Activated B cell treated with CpG ODN at 0.5 μM for 24 hours (primary cell): ENCODE measurements at regions of chr1 and their contacts with region 1.

Region 1: DNA sequence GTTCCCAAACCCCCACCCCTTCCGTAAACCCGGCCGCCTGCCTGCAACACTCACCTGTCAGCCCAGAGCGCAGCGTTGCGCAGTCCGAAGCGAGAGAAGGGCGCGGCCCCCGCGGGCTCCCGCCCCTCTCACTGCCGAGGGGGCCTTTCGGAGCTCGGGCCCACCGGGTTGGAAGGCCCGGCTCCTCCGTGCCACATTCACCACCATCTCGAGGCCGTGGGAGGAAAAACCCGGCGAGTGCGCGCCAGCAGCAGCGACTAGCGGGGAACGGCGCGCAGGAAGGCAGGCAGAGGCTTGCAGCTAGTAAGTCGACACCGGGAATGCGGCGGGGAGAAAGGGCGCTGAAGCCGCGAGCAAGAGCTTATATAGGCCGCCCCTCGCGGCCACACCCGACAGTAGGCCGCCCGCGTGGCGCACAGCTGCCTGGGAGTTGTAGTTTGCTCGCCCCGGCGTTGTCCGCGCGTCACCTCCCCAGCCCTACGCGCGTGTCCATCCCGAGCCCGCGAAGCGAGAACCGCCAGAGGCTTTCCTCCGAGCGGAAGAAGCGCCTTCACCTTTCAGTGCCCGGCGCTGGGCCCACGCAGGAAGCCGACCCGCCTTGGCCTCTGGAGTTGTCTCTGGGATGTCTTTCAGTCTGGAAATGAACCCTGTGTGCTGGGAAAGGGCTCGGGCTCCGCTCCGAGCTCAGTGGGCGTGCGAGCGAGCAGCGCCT is 10.4 kb upstream of the RAB42 start:
- DNase-seq: peak; percentile 94
- ATAC-seq: peak; percentile 90
- H3K4me3 Mint-ChIP-seq: peak overlapping the region; percentile 96
- H3K27ac Mint-ChIP-seq: peak overlapping the region; percentile 91
- H3K4me1 Mint-ChIP-seq: peaks cover 48% of the 10 kb centered on the region
- H3K27me3 Mint-ChIP-seq: no peaks in the 10 kb centered on the region
- CTCF ChIP-seq: no peak

Region 2: GRCh38 chr1:28259307-28260167 is 322.2 kb before region 1 on chr1 and contains the start of gene SESN2:
- CTCF ChIA-PET with region 1: no interaction called
- POLR2A ChIA-PET with region 1: interaction called, 16 read pairs
- intact Hi-C with region 1: no loop called
- DNase-seq: peak; percentile 99
- ATAC-seq: peak; percentile 98
- H3K4me3 Mint-ChIP-seq: peak within 1 kb of the TSS; percentile 82
- H3K27ac Mint-ChIP-seq: peak within 1 kb of the TSS; percentile 79
- H3K4me1 Mint-ChIP-seq: peaks cover 23% of the 10 kb centered on the region
- H3K27me3 Mint-ChIP-seq: peaks cover 6% of the 10 kb centered on the region
- CTCF ChIP-seq: no peak
- total RNA-seq, gene SESN2: 19.5 and 19.8 TPM in 2 replicates

Region 3: GRCh38 chr1:28395181-28395580 is 186.5 kb before region 1 on chr1:
- CTCF ChIA-PET with region 1: no interaction called
- POLR2A ChIA-PET with region 1: no interaction called
- intact Hi-C with region 1: no loop called
- DNase-seq: no peak
- ATAC-seq: no peak
- H3K4me3 Mint-ChIP-seq: no peak overlapping the region
- H3K27ac Mint-ChIP-seq: no peak overlapping the region
- H3K4me1 Mint-ChIP-seq: no peaks in the 10 kb centered on the region
- H3K27me3 Mint-ChIP-seq: no peaks in the 10 kb centered on the region
- CTCF ChIP-seq: no peak

Region 4: GRCh38 chr1:28552758-28553663 is 28.7 kb before region 1 on chr1 and contains the start of gene TRNAU1AP:
- CTCF ChIA-PET with region 1: interaction called, 10 read pairs
- POLR2A ChIA-PET with region 1: interaction called, 221 read pairs
- intact Hi-C with region 1: loop called (anchors 1 kb)
- DNase-seq: peak; percentile 94
- ATAC-seq: peak; percentile 93
- H3K4me3 Mint-ChIP-seq: peak within 1 kb of the TSS; percentile 99
- H3K27ac Mint-ChIP-seq: peak within 1 kb of the TSS; percentile 98
- H3K4me1 Mint-ChIP-seq: peaks cover 26% of the 10 kb centered on the region
- H3K27me3 Mint-ChIP-seq: no peaks in the 10 kb centered on the region
- CTCF ChIP-seq: no peak
- total RNA-seq, gene TRNAU1AP: 36.9 and 42.0 TPM in 2 replicates

Region 5: DNA sequence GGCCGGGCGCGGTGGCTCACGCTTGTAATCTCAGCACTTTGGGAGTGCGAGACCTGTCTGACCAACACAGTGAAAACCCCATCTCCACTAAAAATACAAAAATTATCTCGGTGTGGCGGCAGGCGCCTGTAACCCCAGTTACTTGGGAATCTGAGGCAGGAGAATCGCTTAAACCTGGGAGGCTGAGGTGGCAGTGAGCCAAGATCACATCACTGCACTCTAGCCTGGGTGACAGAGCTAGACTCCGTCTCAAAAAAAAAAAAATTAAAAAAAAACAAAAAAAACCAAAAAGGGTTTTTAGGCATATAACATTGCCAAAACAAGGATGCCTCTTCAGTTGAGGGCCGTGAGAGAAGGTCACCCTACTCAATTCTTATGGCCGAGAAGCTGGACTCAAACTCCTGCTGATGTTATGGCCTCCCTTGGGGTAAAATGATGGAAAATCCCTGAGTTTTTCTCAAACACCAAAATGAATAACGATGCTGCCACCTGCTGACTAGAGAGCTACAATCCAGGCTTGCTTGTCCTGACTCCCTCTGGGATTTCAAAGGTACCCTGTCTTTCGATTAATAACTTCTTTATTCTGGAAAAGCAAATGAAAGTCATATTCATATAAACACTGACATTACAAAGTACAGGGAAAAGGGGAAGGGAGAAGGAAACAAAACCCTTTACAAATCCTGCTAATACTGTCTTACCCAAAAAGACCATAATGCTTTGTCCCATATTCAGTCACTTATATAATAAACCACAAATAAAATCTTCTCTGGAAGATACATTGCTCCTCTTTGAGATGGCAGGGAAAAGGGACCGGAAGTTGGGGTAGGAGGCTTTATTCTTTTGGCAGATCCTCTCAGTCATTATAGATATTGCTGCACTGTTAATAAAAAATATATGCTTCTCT is 21.1 kb after region 1 on chr1:
- CTCF ChIA-PET with region 1: interaction called, 9 read pairs
- POLR2A ChIA-PET with region 1: interaction called, 38 read pairs
- intact Hi-C with region 1: no loop called
- DNase-seq: no peak
- ATAC-seq: peak; percentile 42
- H3K4me3 Mint-ChIP-seq: no peak overlapping the region
- H3K27ac Mint-ChIP-seq: no peak overlapping the region
- H3K4me1 Mint-ChIP-seq: no peaks in the 10 kb centered on the region
- H3K27me3 Mint-ChIP-seq: no peaks in the 10 kb centered on the region
- CTCF ChIP-seq: peak; percentile 53

Region 6: DNA sequence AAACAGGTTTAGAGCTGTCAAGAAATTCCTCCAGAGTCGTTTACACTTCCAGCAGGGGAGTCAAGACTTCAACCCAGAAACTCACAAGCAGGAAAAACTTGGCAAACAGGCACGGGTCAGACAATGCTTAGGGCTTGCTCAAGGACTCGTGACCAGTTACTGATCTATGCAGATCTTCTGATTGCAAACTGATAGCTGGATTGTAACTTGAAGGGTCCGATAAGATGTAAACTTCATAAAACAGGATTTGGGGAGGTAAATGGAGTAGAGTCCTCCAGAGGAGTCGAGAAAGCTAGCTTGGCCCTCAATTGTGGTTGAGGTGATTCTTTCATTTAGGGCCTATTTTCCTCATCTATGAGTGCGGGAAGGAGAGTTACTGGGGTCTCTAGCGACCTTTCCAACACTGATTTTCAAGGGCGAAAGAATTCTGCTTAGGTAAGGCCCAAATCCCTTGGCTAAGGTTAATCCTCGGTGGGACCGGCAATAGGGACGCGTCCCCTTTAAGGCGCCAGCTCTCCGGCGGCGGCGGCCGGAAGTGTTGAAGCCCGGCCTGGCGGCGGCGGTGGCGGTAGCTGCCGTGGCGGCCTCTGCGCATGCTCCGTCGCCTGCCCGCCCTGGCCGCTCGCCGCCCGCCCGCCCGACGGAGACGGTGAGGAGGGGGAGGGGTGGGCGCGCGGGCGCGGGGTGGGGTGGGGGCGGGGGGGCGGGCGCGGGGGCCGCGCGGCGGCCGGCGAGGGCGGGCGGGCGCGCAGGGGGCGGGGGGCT is 86.7 kb after region 1 on chr1 and contains the start of gene GMEB1:
- CTCF ChIA-PET with region 1: no interaction called
- POLR2A ChIA-PET with region 1: interaction called, 36 read pairs
- intact Hi-C with region 1: loop called (anchors 1 kb)
- DNase-seq: peak; percentile 73
- ATAC-seq: peak; percentile 65
- H3K4me3 Mint-ChIP-seq: peak within 1 kb of the TSS; percentile 92
- H3K27ac Mint-ChIP-seq: peak within 1 kb of the TSS; percentile 97
- H3K4me1 Mint-ChIP-seq: peaks cover 17% of the 10 kb centered on the region
- H3K27me3 Mint-ChIP-seq: no peaks in the 10 kb centered on the region
- CTCF ChIP-seq: no peak
- total RNA-seq, gene GMEB1: 26.8 and 27.4 TPM in 2 replicates

Region 7: DNA sequence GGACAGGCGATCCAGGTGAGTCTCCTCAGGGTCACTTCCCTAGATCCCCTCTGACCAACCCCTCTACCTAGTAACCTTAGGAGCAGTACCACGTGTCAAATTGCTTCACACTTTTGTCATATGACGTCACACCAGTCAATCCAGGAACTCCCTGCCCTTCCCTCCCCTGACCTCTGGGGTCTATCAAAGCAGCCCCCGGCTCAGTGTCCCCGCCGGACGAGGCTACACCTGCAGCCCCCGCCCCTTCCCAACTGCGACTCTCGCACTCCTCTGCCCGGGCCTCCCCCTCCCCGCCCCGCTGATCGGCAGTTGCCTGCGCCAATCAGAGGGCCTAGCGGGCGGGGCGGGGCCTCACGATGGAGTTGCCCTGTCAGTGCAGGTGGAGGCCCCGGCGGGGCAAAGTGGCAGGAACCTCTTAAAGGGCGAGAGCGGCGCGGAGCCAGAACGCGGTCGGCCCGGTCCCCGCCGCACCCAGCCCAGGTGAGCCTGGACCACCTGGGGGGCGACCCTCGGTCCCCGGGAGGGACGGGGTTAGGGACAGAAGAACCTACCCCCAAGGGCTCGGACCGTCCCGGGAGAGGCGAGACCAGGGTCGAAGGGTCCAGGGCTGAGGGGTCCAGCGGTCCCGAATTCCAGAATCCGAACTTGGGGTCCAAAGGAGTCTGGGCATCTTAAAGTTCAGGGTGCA is 305.2 kb after region 1 on chr1:
- CTCF ChIA-PET with region 1: no interaction called
- POLR2A ChIA-PET with region 1: interaction called, 6 read pairs
- intact Hi-C with region 1: loop called (anchors 2 kb)
- DNase-seq: peak; percentile 94
- ATAC-seq: peak; percentile 75
- H3K4me3 Mint-ChIP-seq: peak overlapping the region; percentile 88
- H3K27ac Mint-ChIP-seq: peak overlapping the region; percentile 91
- H3K4me1 Mint-ChIP-seq: peaks cover 58% of the 10 kb centered on the region
- H3K27me3 Mint-ChIP-seq: no peaks in the 10 kb centered on the region
- CTCF ChIP-seq: no peak